Esophagus muscularis mucosa (tissue), 4 donors: ENCODE measurements at regions of chr18 and their contacts with region 1.

Region 1: GRCh38 chr18:58180738-58181353 is 136.8 kb downstream of the NEDD4L start:
- DNase-seq: no peak
- H3K4me3 ChIP-seq: no peak overlapping the region
- H3K27ac ChIP-seq: no peak overlapping the region
- H3K4me1 ChIP-seq: peaks cover 0 to 51% (median 42%) of the 10 kb centered on the region in 4 donors
- H3K27me3 ChIP-seq: no peaks in the 10 kb centered on the region
- CTCF ChIP-seq: peak; percentile 70 to 90 (median 77)
- EP300 ChIP-seq: no peak
- POLR2A ChIP-seq: no peak

Region 2: DNA sequence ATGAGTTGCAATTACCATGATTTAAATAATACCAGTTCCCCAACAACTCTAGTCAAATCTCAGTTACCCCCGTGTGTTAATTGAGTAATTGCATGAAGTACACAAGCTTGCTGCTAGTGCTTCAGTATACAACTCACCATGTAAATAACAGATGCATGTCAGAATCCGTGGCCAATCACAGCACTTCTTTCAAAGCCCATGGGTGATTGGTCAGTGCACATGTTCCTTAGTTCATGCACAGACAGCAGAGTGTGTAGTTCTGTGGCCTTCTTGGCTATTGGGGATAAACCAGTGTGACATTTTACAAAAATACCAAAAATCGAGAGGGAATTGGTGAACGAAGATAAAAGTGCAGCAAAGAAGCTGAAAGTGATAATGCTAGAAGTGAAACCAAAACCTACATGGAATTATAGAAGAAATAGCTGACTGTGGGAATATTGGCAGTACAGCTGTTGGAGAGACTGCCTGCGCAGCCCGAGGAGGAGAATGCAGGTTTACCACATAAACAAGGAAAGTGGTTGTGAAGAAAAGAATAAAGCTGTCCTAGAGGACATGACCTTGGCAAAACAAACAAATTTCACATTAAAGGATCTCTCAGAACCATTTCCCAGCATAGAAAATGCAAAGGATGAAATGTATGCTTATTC is 77.4 kb before region 1 on chr18:
- intact Hi-C with region 1: no loop called
- DNase-seq: no peak
- H3K4me3 ChIP-seq: peak overlapping the region in 1 of 4 donors; percentile 5
- H3K27ac ChIP-seq: no peak overlapping the region
- H3K4me1 ChIP-seq: peaks cover 0 to 26% (median 18%) of the 10 kb centered on the region in 4 donors
- H3K27me3 ChIP-seq: no peaks in the 10 kb centered on the region
- CTCF ChIP-seq: no peak
- EP300 ChIP-seq: no peak
- POLR2A ChIP-seq: no peak

Region 3: GRCh38 chr18:58117786-58118403 is 63.0 kb before region 1 on chr18:
- intact Hi-C with region 1: loop called (anchors 2 kb)
- DNase-seq: no peak
- H3K4me3 ChIP-seq: no peak overlapping the region
- H3K27ac ChIP-seq: peak overlapping the region in 2 of 4 donors; percentile 9 to 13
- H3K4me1 ChIP-seq: peaks cover 0 to 20% (median 18%) of the 10 kb centered on the region in 4 donors
- H3K27me3 ChIP-seq: no peaks in the 10 kb centered on the region
- CTCF ChIP-seq: no peak
- EP300 ChIP-seq: peak; percentile 58
- POLR2A ChIP-seq: no peak

Region 4: GRCh38 chr18:58135701-58136331 is 45.0 kb before region 1 on chr18:
- intact Hi-C with region 1: loop called (anchors 5 kb)
- DNase-seq: no peak
- H3K4me3 ChIP-seq: no peak overlapping the region
- H3K27ac ChIP-seq: no peak overlapping the region
- H3K4me1 ChIP-seq: peaks cover 0 to 16% (median 9%) of the 10 kb centered on the region in 4 donors
- H3K27me3 ChIP-seq: no peaks in the 10 kb centered on the region
- CTCF ChIP-seq: peak; percentile 65 to 77 (median 69)
- EP300 ChIP-seq: no peak
- POLR2A ChIP-seq: no peak

Region 5: DNA sequence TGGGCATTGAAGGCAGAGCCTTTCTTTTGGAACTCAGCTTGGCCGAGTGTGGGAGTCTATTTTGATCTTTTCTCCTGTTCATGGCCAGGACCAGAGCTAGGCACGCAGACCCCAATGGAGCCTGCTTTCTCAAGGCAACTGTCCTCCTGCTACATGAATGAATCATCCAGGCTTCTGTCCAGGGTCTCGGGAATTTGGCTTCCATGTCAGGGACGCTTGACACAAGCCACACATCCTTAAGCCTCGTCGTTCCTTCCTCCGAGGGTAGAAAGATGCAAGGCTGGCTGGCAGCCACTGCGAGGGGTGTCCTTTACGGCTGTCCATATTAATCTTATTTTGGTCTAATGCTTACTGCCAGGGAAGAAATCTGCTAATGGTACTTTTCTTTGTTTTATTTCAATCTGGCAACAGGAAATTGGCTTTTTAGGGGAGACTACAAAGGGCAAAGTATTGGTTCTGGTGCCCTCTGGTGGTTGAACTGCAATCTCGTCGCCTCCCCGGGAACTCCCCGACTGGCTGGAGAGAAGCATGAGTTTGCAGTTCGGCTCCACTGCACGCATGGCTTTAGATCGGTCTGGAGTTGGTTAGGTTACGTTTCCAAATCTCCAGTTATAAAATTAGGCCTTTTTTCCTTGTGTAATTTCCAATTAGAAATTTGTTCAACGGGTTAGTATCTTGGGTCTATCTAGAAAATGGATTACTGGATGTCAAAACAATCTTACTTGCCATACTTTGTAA is 312.8 kb after region 1 on chr18:
- intact Hi-C with region 1: loop called (anchors 10 kb)
- DNase-seq: peak; percentile 94
- H3K4me3 ChIP-seq: peak overlapping the region; percentile 23 to 38 (median 31)
- H3K27ac ChIP-seq: peak overlapping the region; percentile 34 to 71 (median 66)
- H3K4me1 ChIP-seq: peaks cover 29 to 75% (median 67%) of the 10 kb centered on the region in 4 donors
- H3K27me3 ChIP-seq: no peaks in the 10 kb centered on the region
- CTCF ChIP-seq: peak; percentile 80 to 90 (median 88)
- EP300 ChIP-seq: no peak
- POLR2A ChIP-seq: no peak